ENCODE measurements at regions of chr10 and their contacts with region 1.

Region 1: DNA sequence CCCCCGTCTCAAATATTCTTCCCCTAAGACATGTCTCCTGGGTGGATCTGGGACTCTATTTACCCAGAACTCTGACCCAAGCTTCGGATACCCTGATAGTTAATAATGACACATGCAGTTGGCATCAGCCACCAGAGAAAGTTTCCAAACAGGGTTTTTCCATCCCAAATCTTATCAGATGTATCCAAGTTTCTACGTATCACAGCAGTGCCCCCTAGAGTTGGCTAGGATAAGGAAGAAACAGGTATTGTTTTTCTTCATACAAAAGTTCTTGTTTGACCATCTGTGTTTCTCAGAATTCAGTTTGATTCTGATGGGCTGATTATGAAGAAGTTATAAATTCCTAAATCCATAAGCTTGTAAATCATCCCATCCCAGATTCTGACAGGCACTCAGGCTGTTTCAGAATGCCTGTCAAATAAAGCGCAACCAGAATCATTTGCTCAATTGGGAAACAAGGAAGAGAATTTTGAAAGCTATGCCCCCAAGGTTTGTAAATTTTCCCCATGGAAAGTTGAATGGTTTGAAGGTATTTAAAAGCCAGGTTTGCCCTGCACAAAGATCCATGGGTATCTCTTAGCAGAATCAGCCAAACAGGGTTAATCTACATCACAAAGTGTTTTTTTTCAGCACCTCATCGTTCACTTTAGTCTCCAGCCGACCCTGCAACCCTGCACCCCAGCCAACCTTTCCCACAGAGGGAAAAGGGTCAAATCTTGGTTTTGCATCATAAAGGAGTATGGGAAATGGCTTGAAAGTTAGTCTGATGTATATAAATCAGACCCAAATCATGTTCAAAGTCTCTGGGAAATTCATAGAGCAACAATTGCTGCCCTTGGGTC is 47.4 kb downstream of the NRAP start:
- DNase-seq: no peak
- H3K4me3 ChIP-seq: no peak overlapping the region
- H3K27ac ChIP-seq: no peak overlapping the region
- H3K4me1 ChIP-seq: no peaks in the 10 kb centered on the region
- H3K27me3 ChIP-seq: peaks cover 0 to 5% of the 10 kb centered on the region in 2 donors
- CTCF ChIP-seq: no peak
- POLR2A ChIP-seq: no peak

Region 2: DNA sequence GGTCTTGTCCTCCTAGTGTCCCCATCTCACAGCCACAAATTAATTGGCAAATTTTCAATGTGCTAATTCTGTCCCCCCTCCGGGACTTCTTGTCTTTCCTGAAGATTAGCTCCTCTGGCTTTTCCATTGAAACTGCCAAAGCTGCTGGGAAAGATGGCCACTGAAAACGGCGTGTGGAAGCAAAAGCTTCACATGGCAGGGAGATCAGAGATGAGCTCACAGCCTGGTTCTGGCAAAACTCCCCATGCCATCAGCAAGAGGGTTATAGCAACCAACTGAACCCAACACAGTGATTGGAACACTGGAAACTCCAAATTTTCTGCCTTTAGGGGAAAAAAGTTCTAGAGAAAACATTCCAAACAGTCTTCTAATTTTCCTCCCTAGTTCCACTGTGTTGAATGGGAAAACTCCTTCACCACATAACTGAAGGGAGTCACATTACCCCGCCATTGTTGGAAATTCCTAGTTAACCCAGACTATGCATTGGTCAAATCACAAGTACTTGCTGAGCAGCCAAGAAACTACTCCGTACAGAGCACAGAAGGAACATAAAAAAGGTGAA is 10.4 kb after region 1 on chr10:
- intact Hi-C with region 1: no loop called
- DNase-seq: peak in 1 of 2 donors; percentile 37
- H3K4me3 ChIP-seq: no peak overlapping the region
- H3K27ac ChIP-seq: no peak overlapping the region
- H3K4me1 ChIP-seq: no peaks in the 10 kb centered on the region
- H3K27me3 ChIP-seq: peaks cover 0 to 8% of the 10 kb centered on the region in 2 donors
- CTCF ChIP-seq: no peak
- POLR2A ChIP-seq: no peak

Region 3: DNA sequence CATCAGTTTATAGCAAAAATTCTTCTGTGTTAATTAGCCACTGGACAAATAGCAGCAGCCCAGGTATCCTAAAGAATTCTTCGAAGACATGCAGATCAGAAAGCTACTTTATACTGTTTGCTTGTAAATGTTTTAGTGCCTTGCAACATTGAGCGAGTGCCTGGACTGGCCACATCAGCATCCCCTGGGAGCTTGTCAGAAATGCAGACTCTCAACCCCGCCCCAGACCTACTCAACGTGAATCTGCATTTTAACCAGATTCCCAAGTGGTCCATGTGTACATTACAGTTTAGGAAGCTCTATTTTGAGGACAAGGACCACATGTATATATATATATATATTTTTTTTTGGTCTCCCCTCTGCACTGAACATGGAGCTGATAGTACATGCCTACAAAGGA is 116.5 kb after region 1 on chr10:
- intact Hi-C with region 1: no loop called
- DNase-seq: no peak
- H3K4me3 ChIP-seq: no peak overlapping the region
- H3K27ac ChIP-seq: no peak overlapping the region
- H3K4me1 ChIP-seq: no peaks in the 10 kb centered on the region
- H3K27me3 ChIP-seq: no peaks in the 10 kb centered on the region
- CTCF ChIP-seq: no peak
- POLR2A ChIP-seq: no peak

Region 4: DNA sequence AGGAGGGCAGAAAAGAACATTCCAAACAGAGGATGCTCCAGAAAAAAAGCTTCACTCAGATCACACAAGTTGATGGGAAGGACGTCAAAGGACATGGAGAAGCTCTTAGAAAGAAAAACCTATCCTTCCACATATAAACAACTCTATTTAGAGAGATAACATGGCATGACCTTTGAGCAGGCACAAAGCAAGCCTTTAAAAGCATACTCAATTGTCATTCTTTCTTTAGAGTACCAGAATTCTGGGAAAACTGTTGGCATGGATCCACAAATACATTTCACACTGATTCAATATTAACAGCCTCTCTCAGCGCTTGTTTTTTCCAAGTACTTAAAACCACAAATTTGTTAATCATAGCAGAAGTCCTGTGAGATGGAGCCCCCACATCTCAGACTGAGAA is 1049.0 kb after region 1 on chr10:
- intact Hi-C with region 1: loop called (anchors 5 kb)
- DNase-seq: no peak
- H3K4me3 ChIP-seq: no peak overlapping the region
- H3K27ac ChIP-seq: no peak overlapping the region
- H3K4me1 ChIP-seq: no peaks in the 10 kb centered on the region
- H3K27me3 ChIP-seq: no peaks in the 10 kb centered on the region
- CTCF ChIP-seq: no peak
- POLR2A ChIP-seq: no peak

Measured in breast epithelium (tissue), 4 donors.